Uterus (tissue), 4 donors: ENCODE measurements at regions of chr1 and their contacts with region 1.

Region 1: DNA sequence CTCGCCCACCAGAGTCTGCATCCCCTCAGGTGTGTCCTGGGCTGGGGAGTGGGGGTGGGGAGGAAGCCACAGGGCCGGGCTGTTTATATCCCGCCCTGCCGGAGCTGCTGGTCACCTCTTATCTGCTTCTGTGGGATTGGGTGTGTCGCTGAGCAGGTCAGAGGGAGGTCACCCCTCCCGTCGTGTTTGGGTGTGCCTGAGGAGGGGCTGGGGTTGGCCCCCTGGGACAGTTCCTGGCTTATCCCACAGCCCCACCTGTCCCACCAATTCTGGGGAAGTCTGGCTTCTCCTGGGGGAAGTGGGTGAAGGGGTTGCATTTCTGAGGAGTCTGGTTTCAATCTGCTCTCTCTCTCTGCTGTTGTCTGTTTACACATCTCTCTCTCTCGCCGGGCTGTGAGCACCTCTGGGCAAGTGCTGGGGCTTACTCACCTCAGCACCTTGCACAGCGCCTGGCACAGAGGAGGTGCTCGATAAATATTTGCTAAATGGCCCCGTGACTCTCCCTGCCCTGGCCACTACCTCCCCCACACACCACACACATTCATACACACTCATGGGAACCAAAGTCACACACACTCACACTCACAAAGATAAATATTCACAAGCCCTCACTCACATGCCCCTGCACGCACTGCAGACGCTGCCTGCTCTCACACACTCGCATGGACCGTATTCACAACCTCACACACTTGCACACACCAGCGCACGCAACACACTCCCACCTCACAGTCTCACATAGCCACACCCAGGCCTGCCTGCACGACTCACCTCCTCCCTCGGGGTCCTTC is 8.3 kb downstream of the ELF3 start:
- DNase-seq: no peak
- H3K4me3 ChIP-seq: no peak overlapping the region
- H3K27ac ChIP-seq: no peak overlapping the region
- H3K4me1 ChIP-seq: no peaks in the 10 kb centered on the region
- H3K27me3 ChIP-seq: no peaks in the 10 kb centered on the region
- CTCF ChIP-seq: no peak
- POLR2A ChIP-seq: no peak

Region 2: DNA sequence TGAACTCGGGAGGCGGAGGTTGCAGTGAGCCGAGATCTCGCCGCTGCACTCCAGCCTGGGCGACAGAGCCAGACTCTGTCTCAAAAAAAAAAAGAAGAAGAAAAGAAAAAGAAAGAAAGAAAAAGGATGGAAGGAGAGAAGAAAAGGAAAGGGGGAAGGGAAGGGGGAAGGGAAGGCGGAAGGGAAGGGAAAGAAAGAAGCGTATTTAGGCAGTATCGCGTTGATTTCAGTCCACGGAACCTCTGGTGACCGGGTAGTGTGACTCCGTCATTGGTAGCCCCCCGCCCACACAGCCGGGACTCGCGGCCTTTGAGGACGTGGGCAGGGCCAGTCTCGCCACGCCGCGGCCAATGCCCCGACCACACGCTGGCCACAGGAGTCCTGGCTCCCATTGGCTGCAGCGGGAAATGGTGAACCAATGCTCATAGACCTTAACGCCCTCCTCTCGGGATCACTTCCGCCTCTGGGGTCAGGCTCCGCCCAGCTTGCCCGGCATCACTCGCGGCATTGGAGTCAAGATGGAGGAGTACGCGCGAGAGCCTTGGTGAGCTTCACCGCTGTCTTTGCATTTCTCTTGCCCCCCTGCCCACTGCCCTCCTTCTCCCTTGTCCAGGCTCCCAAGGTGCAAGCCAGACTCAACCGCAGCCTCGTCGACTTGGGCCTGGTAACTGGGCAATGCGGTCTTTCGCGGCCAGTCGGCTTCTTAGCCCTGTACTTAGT is 63.5 kb before region 1 on chr1 and contains the start of gene TIMM17A:
- intact Hi-C with region 1: no loop called
- DNase-seq: peak; percentile 96 to 97
- H3K4me3 ChIP-seq: peak within 1 kb of the TSS; percentile 66 to 80
- H3K27ac ChIP-seq: peak within 1 kb of the TSS; percentile 84 to 89
- H3K4me1 ChIP-seq: peaks cover 0 to 10% of the 10 kb centered on the region in 2 donors
- H3K27me3 ChIP-seq: no peaks in the 10 kb centered on the region
- CTCF ChIP-seq: peak in 3 of 4 experiments; percentile 7 to 22 (median 13)
- POLR2A ChIP-seq: peak; percentile 87 to 91
- total RNA-seq, gene TIMM17A: 18.7 to 34.9 (median 29.7) TPM

Region 3: GRCh38 chr1:202122639-202123335 is 104.1 kb after region 1 on chr1 and contains the start of gene GPR37L1:
- intact Hi-C with region 1: loop called (anchors 5 kb)
- DNase-seq: peak in 1 of 2 donors; percentile 48
- H3K4me3 ChIP-seq: no peak within 1 kb of the TSS
- H3K27ac ChIP-seq: no peak within 1 kb of the TSS
- H3K4me1 ChIP-seq: no peaks in the 10 kb centered on the region
- H3K27me3 ChIP-seq: no peaks in the 10 kb centered on the region
- CTCF ChIP-seq: peak in 3 of 4 experiments; percentile 30 to 54 (median 41)
- POLR2A ChIP-seq: no peak
- total RNA-seq, gene GPR37L1: 0.09 to 0.21 TPM in 2 of 4 donors, not detected in the others